Mammary epithelial cell (primary cell): ENCODE measurements at regions of chr2 and their contacts with region 1.

Region 1: GRCh38 chr2:25606892-25607291 is 66.5 kb downstream of the DTNB start:
- DNase-seq: peak; percentile 28
- H3K4me3 ChIP-seq: no peak overlapping the region
- H3K27ac ChIP-seq: no peak overlapping the region
- H3K4me1 ChIP-seq: no peaks in the 10 kb centered on the region
- H3K27me3 ChIP-seq: no peaks in the 10 kb centered on the region
- CTCF ChIP-seq: peak; percentile 51 to 68

Region 2: DNA sequence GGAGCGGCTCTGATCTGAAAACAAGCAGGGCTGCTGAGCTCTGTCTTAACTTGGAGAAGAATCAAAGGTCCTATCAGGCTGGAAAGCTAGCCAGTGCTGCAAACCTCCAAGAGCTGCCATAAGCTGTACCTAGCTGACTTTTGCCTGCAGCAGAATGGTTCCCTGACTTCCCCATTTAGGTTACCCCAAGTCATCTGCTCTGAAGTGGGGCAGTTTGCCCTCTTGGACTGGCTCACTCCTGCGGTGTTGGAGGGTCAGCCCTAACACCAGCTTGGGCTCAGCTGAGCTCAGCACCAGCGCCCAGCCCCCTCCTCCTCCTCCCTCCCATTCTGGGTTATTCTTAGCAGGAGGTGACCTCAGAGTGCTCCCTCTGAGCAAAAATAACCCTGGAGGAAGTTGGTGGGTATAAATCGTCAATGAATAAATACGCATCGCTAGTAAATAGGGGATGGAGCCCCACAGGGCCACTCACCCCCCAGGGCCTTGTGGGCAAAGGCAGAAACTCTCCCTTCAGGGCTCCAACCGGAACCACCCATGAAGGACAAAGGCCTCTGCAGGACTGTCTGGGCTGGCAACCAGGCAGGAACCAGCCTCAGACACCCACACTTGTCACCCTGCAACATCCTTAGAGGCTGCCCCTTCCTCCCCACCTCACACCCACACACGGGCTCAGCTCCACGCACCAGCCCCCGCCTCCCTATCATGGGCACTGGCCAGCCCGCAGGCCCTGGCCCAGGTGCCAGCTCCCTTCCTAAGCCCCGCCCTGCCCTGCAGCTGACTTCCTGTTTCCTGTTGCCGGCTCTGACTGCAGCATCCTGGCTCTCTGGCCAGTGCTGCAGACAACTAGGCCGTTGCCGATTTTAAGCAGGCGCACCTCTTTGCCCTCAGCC is 312.1 kb before region 1 on chr2:
- CTCF ChIA-PET with region 1: no interaction called
- dilution Hi-C with region 1: no loop called
- in situ Hi-C with region 1: no loop called
- intact Hi-C with region 1: no loop called
- DNase-seq: peak; percentile 27
- H3K4me3 ChIP-seq: no peak overlapping the region
- H3K27ac ChIP-seq: no peak overlapping the region
- H3K4me1 ChIP-seq: peaks cover 20% of the 10 kb centered on the region
- H3K27me3 ChIP-seq: no peaks in the 10 kb centered on the region
- CTCF ChIP-seq: no peak

Region 3: GRCh38 chr2:25497918-25498407 is 108.9 kb before region 1 on chr2:
- CTCF ChIA-PET with region 1: no interaction called
- dilution Hi-C with region 1: no loop called
- in situ Hi-C with region 1: no loop called
- intact Hi-C with region 1: no loop called
- DNase-seq: no peak
- H3K4me3 ChIP-seq: no peak overlapping the region
- H3K27ac ChIP-seq: no peak overlapping the region
- H3K4me1 ChIP-seq: no peaks in the 10 kb centered on the region
- H3K27me3 ChIP-seq: no peaks in the 10 kb centered on the region
- CTCF ChIP-seq: no peak

Region 4: GRCh38 chr2:25664183-25664964 is 57.5 kb after region 1 on chr2:
- CTCF ChIA-PET with region 1: interaction called, 6 read pairs
- dilution Hi-C with region 1: no loop called
- in situ Hi-C with region 1: loop called in 1 of 2 experiments (anchors 10 kb)
- intact Hi-C with region 1: loop called (anchors 1 kb)
- DNase-seq: peak; percentile 72
- H3K4me3 ChIP-seq: no peak overlapping the region
- H3K27ac ChIP-seq: peak overlapping the region; percentile 47
- H3K4me1 ChIP-seq: peaks cover 14% of the 10 kb centered on the region
- H3K27me3 ChIP-seq: no peaks in the 10 kb centered on the region
- CTCF ChIP-seq: peak; percentile 63 to 66

Region 5: GRCh38 chr2:25673300-25674076 is 66.6 kb after region 1 on chr2 and contains the start of gene DTNB:
- CTCF ChIA-PET with region 1: no interaction called
- dilution Hi-C with region 1: loop called (anchors 5 kb)
- in situ Hi-C with region 1: loop called in 1 of 2 experiments (anchors 10 kb)
- intact Hi-C with region 1: loop called (anchors 1 kb)
- DNase-seq: peak; percentile 89
- H3K4me3 ChIP-seq: peak within 1 kb of the TSS; percentile 79 to 93 (median 85)
- H3K27ac ChIP-seq: peak within 1 kb of the TSS; percentile 67
- H3K4me1 ChIP-seq: peaks cover 24% of the 10 kb centered on the region
- H3K27me3 ChIP-seq: no peaks in the 10 kb centered on the region
- CTCF ChIP-seq: no peak
- total RNA-seq, gene DTNB: 38.8 to 42.9 TPM

Region 6: DNA sequence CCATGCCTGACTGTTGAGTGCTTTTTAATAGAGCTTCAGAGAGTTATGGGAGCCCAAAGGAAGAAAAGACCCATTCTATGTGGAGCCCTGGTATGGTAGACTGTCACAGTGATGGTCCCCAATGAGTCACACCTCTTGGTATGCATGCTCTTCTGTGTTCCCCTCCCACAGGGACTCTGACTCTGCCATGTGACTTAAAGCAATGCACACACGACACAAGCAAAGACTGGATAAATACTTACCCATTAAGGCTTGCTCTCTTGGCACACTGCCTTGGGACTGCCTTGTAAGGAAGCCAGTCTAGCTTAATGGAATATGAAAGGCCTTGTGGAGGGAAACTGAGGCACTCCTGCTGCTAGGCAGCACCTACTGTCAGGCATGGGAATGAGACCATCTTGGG is 83.2 kb after region 1 on chr2:
- CTCF ChIA-PET with region 1: no interaction called
- dilution Hi-C with region 1: no loop called
- in situ Hi-C with region 1: loop called in 1 of 2 experiments (anchors 10 kb)
- intact Hi-C with region 1: no loop called
- DNase-seq: no peak
- H3K4me3 ChIP-seq: no peak overlapping the region
- H3K27ac ChIP-seq: no peak overlapping the region
- H3K4me1 ChIP-seq: peaks cover 6% of the 10 kb centered on the region
- H3K27me3 ChIP-seq: no peaks in the 10 kb centered on the region
- CTCF ChIP-seq: no peak

Region 7: GRCh38 chr2:25700221-25700660 is 93.3 kb after region 1 on chr2:
- CTCF ChIA-PET with region 1: interaction called, 14 read pairs
- dilution Hi-C with region 1: no loop called
- in situ Hi-C with region 1: loop called in 1 of 2 experiments (anchors 10 kb)
- intact Hi-C with region 1: loop called (anchors 1 kb)
- DNase-seq: peak; percentile 78
- H3K4me3 ChIP-seq: no peak overlapping the region
- H3K27ac ChIP-seq: no peak overlapping the region
- H3K4me1 ChIP-seq: peaks cover 15% of the 10 kb centered on the region
- H3K27me3 ChIP-seq: no peaks in the 10 kb centered on the region
- CTCF ChIP-seq: peak; percentile 84 to 93

Region 8: GRCh38 chr2:25851740-25852503 is 245.0 kb after region 1 on chr2:
- CTCF ChIA-PET with region 1: no interaction called
- dilution Hi-C with region 1: no loop called
- in situ Hi-C with region 1: no loop called
- intact Hi-C with region 1: loop called (anchors 2 kb)
- DNase-seq: peak; percentile 70
- H3K4me3 ChIP-seq: no peak overlapping the region
- H3K27ac ChIP-seq: peak overlapping the region; percentile 7
- H3K4me1 ChIP-seq: peaks cover 7% of the 10 kb centered on the region
- H3K27me3 ChIP-seq: no peaks in the 10 kb centered on the region
- CTCF ChIP-seq: peak; percentile 67 to 72

Region 9: DNA sequence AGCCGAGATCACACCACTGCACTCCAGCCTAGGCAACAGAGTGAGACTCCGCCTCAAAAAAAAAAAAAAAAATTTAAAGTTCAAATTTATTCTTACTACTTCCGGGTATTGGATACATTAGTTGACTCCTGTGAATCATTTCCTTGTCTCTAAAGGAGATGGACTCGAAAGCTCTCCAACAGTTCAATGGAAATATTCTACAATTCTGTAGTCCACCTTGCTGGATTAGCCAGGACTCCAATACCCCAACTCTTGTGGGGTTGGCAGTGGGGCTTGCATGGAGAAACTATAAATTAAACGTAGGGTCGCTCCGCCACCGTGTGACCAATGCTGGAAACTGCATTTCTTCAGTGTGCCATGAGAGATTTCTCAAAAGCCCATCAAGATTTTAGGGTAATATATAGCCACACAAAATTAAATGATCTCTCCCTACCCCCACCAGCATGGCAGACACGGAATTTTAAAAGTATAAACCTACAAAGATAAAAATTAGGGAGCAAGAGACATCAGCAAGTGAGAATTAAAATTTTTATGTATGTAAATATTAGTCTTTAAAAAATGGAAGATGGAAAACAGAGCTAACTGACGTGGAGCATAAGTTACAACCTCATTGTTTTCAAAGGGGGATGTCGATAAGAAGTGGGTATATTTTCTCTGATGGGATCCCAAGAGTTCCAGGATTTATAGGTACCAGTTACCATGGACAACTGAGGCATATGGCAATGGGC is 538.2 kb after region 1 on chr2:
- CTCF ChIA-PET with region 1: no interaction called
- dilution Hi-C with region 1: no loop called
- in situ Hi-C with region 1: no loop called
- intact Hi-C with region 1: loop called (anchors 2 kb)
- DNase-seq: peak; percentile 39
- H3K4me3 ChIP-seq: no peak overlapping the region
- H3K27ac ChIP-seq: no peak overlapping the region
- H3K4me1 ChIP-seq: no peaks in the 10 kb centered on the region
- H3K27me3 ChIP-seq: no peaks in the 10 kb centered on the region
- CTCF ChIP-seq: peak; percentile 69 to 77